Activated CD4-positive, alpha-beta T cell treated with anti-CD3 and anti-CD28 coated beads, Interleukin-2, amount 10 ng/mL, durations not matched to agents 7 days and 5 days (primary cell): ENCODE measurements at regions of chr1 and their contacts with region 1.

Region 1: DNA sequence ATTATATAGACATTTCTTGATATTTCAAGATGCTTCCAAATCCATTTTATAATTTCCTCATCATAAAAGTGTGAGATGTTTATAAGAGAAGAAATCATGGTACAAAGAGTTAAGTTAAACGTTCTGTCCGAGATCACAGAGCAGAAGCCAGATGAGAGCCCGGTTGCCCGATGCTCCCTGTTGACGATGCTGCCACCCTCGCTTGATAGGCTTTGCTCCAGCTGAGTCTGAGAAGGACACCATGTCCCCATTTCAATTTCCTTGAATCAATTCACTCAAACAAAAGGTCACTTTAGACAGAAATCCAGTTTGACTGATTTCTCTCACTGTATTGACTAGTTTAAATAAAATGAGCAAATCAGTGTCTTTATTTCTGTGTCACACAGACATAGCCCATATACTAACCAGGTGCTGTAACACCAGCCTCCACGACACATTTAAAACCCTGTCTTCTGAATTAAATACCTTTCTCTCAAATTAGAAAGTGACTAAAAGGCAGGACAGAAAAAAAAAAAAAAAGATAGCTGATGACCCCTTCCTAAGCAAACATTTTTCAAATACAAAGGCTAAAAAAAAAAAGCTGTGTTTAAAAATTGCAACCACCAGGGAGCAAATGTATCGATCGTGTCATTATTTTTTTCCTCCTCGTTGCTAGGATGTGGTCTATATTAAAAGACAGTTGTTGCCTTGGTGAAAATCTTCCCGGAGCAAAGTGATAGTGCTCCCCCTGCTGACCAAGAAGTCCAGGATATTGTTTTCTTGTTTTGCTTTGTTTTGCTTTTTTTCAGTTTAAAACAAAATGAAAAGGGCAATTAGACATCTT is 35.2 kb downstream of the DNASE2B start:
- DNase-seq: peak; percentile 79
- H3K4me3 Mint-ChIP-seq: peak overlapping the region; percentile 51
- H3K27ac Mint-ChIP-seq: no peak overlapping the region
- H3K4me1 Mint-ChIP-seq: peaks cover 23% of the 10 kb centered on the region
- H3K27me3 Mint-ChIP-seq: no peaks in the 10 kb centered on the region

Region 2: GRCh38 chr1:84143796-84144565 is 289.5 kb before region 1 on chr1 and contains the start of gene PRKACB:
- CTCF ChIA-PET with region 1: interaction called, 12 read pairs
- POLR2A ChIA-PET with region 1: interaction called, 8 read pairs
- DNase-seq: peak; percentile 55
- H3K4me3 Mint-ChIP-seq: peak within 1 kb of the TSS; percentile 97
- H3K27ac Mint-ChIP-seq: peak within 1 kb of the TSS; percentile 99
- H3K4me1 Mint-ChIP-seq: peaks cover 33% of the 10 kb centered on the region
- H3K27me3 Mint-ChIP-seq: no peaks in the 10 kb centered on the region
- total RNA-seq, gene PRKACB: 108 to 119 TPM

Region 3: DNA sequence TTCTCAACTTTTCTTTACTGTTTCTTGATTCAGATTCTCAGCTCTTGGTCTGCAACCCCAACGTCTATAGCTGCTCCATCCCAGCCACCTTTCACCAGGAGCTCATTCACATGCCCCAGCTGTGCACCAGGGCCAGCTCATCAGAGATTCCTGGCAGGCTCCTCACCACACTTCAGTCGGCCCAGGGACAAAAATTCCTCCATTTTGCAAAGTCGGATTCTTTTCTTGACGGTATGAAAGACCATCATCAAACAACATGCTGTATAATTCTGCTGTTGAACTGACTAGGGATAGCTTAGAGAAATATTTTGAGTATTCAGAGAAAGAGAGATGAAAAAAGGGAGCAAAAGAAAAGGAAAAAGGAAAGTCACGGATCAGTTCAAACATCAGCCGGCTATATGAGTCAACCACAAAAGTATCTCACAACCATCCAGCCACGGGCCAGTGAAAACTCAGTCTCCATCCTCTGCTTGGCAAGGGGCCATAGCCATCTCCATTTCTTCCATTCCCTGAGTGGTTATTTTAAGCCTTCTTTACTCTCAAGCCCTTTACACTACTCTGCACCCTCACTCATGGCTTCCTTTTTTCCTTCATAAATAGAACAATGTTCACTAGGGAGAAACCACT is 21.0 kb before region 1 on chr1:
- CTCF ChIA-PET with region 1: no interaction called
- POLR2A ChIA-PET with region 1: no interaction called
- DNase-seq: no peak
- H3K4me3 Mint-ChIP-seq: no peak overlapping the region
- H3K27ac Mint-ChIP-seq: no peak overlapping the region
- H3K4me1 Mint-ChIP-seq: no peaks in the 10 kb centered on the region
- H3K27me3 Mint-ChIP-seq: no peaks in the 10 kb centered on the region

Region 4: GRCh38 chr1:84450910-84451309 is 17.4 kb after region 1 on chr1:
- CTCF ChIA-PET with region 1: no interaction called
- POLR2A ChIA-PET with region 1: no interaction called
- DNase-seq: no peak
- H3K4me3 Mint-ChIP-seq: no peak overlapping the region
- H3K27ac Mint-ChIP-seq: no peak overlapping the region
- H3K4me1 Mint-ChIP-seq: no peaks in the 10 kb centered on the region
- H3K27me3 Mint-ChIP-seq: peaks cover 27% of the 10 kb centered on the region

Region 5: DNA sequence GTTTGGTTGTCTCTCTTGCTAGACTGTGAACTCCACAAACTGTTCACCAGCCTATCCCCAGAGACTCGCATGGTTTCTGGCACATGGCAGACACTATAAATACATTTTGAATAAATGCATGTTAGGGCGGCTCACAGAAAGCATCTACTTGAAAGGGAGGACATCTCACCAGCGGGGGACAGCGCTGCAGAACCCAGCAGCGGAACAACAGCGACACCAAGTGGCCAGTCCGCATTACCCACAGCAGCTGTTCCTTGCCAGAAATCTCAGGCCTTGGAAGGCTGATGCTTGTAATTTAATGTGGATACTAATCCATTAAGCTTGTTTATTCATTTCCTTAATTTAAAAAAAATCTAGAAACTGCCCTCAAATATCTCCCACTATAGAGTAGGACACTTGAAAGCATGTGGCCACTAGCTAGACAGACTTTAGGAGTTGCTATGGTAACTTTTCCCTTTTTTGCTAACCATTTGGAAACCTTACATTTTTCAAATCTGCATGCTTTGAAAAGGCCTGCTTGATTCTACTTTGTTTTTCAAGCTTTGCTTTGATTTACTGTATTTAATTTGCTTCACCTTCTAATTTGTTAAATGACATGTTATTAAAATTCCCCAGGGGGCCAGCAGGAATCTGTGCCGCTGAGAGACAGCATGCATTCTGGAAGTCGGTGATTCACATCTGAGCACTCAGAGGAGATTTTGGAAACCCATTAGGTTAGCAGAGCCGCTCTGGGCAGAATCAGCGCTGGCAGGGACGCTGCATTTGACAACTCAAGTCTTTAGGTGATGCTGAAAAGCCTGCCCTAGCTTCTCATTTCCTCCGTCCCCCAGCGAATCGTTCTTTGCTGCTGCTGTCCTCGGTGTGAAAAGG is 320.3 kb after region 1 on chr1:
- CTCF ChIA-PET with region 1: interaction called, 13 read pairs
- POLR2A ChIA-PET with region 1: no interaction called
- DNase-seq: peak; percentile 80
- H3K4me3 Mint-ChIP-seq: no peak overlapping the region
- H3K27ac Mint-ChIP-seq: no peak overlapping the region
- H3K4me1 Mint-ChIP-seq: peaks cover 10% of the 10 kb centered on the region
- H3K27me3 Mint-ChIP-seq: peaks cover 14% of the 10 kb centered on the region